ENCODE measurements at regions of chr12 and their contacts with region 1.

Region 1: DNA sequence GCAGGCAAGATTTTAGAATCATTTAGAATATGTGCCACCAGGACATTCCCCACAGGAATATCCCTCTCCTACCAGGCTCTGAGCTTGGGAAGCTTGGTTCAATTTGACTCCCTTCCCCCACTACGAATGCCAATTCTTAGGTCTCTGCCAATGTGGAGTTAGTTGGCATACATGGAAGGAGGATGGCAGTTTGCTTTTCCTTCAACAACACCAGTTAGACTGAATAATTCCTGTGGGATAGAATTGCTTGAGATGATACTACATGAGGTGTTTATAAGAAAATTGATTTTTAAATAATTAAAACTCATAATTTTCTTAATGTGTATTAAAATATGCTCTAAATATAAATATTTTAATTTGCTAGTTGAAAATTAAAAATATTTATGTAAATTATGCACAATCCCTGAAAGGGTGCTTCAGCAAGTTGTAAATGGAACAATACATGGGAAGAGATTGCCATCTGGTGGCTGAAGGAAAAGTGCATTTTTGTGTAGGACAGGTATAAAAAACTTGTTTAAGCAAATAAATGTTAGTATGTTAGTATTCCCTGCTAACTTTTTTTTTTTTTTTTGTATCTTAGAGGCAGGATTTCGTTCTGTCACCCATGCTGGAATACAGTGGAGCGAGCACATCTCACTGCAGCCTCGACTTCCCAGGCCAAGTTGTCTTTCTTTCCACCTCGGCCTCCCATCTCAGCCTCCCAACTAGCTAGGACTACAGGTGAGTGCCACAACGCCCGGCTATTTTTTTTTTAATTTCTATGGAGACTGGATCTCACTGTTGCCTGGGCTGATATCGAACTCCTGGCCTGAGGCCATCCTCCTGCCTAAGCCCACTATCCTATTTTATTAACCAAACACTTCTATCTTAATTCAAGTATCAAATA is 25.8 kb upstream of the STRAP start:
- DNase-seq: peak; percentile 70
- H3K4me3 Mint-ChIP-seq: no peak overlapping the region
- H3K27ac Mint-ChIP-seq: peak overlapping the region; percentile 43
- H3K4me1 Mint-ChIP-seq: peaks cover 38% of the 10 kb centered on the region
- H3K27me3 Mint-ChIP-seq: no peaks in the 10 kb centered on the region
- CTCF ChIP-seq: peak; percentile 69

Region 2: GRCh38 chr12:15276088-15276698 is 580.1 kb before region 1 on chr12:
- CTCF ChIA-PET with region 1: no interaction called
- intact Hi-C with region 1: loop called (anchors 10 kb)
- DNase-seq: peak; percentile 41
- H3K4me3 Mint-ChIP-seq: no peak overlapping the region
- H3K27ac Mint-ChIP-seq: no peak overlapping the region
- H3K4me1 Mint-ChIP-seq: peaks cover 22% of the 10 kb centered on the region
- H3K27me3 Mint-ChIP-seq: no peaks in the 10 kb centered on the region
- CTCF ChIP-seq: peak; percentile 59

Region 3: DNA sequence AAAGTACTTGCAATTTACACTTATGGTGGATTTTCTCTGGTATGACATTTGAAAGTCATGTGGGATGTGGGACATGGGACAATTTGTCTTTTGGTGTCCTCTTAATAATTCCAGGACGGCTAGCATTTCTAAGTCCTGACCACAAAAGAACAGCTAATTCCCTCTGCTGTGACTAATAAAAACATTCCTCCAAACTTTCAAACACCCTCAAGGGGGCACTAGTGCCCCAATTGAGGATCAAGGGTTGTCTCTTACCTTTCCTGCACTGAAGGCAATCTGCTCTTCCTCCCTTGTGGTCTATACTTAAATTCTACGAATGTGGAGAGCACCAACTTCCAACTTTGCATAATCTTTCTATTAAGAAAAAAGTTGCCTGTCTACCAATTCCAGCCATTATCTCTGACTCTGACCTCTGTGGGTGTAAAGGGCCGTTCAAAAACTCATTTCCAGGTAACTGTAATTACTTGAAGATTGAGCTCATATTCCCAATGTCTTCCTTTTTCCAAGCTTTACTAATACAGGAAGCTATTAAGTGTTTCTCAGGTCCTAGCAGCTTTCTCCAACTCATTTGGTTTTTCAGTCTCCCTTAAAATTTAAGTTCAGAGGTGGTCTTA is 323.9 kb before region 1 on chr12:
- CTCF ChIA-PET with region 1: interaction called, 10 read pairs
- intact Hi-C with region 1: loop called (anchors 1 kb)
- DNase-seq: peak; percentile 74
- H3K4me3 Mint-ChIP-seq: no peak overlapping the region
- H3K27ac Mint-ChIP-seq: no peak overlapping the region
- H3K4me1 Mint-ChIP-seq: peaks cover 14% of the 10 kb centered on the region
- H3K27me3 Mint-ChIP-seq: no peaks in the 10 kb centered on the region
- CTCF ChIP-seq: peak; percentile 63

Region 4: GRCh38 chr12:15662303-15662980 is 193.9 kb before region 1 on chr12:
- CTCF ChIA-PET with region 1: interaction called, 3 read pairs
- intact Hi-C with region 1: loop called (anchors 2 kb)
- DNase-seq: no peak
- H3K4me3 Mint-ChIP-seq: peak overlapping the region; percentile 47
- H3K27ac Mint-ChIP-seq: peak overlapping the region; percentile 99
- H3K4me1 Mint-ChIP-seq: peaks cover 17% of the 10 kb centered on the region
- H3K27me3 Mint-ChIP-seq: no peaks in the 10 kb centered on the region
- CTCF ChIP-seq: no peak

Region 5: DNA sequence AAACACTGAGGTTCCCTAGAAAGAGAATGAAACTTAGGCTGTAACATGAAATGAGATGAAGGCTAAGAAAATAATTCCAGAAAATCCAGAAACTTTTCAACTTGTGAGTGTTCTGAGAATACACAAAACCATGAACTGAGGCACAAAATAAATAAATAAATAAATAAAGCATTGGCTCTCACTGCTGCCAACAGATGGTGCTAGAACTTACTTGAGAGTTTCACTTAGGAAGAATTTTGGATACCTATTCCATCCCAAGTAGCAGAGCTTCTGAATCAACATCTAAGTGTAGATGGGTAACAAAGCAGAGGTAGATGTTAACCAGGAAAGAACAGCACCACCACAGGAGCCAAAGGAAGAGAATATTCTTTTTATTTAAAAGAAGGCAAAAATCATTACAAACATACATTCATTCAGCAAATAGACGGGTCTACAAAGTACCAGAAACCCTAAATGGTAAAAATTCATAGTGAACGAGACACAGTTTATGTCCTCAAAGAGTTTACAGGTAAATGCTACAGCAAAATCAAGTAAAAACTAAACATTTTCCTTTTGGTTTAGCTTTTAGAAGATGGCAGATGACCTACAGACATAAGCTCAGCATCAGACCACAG is 83.8 kb before region 1 on chr12:
- CTCF ChIA-PET with region 1: interaction called, 6 read pairs
- intact Hi-C with region 1: loop called (anchors 5 kb)
- DNase-seq: no peak
- H3K4me3 Mint-ChIP-seq: no peak overlapping the region
- H3K27ac Mint-ChIP-seq: peak overlapping the region; percentile 86
- H3K4me1 Mint-ChIP-seq: peaks cover 59% of the 10 kb centered on the region
- H3K27me3 Mint-ChIP-seq: no peaks in the 10 kb centered on the region
- CTCF ChIP-seq: peak; percentile 15

Region 6: DNA sequence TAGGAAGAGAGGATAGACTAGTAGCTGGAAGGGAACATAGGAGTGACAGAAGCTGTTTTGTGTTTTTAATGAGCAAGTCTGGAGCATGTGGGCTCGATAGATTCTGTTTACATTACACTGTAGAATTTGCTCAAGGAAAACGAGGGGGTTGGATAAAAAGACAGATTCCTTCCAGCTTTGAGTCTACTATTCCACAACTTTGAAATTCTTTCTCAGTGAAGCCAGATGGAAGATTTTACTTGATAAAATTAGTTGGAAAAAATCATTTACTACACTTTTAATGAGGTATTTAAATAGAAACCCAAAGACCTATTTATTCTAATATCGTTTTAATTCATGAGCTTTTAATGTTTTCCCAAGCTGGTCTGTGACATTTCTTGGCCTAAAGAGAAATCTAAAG is 47.7 kb before region 1 on chr12:
- CTCF ChIA-PET with region 1: no interaction called
- intact Hi-C with region 1: no loop called
- DNase-seq: no peak
- H3K4me3 Mint-ChIP-seq: no peak overlapping the region
- H3K27ac Mint-ChIP-seq: no peak overlapping the region
- H3K4me1 Mint-ChIP-seq: peaks cover 13% of the 10 kb centered on the region
- H3K27me3 Mint-ChIP-seq: no peaks in the 10 kb centered on the region
- CTCF ChIP-seq: no peak